Posterior vena cava (tissue), 2 donors: ENCODE measurements at regions of chr17 and their contacts with region 1.

Region 1: GRCh38 chr17:40303009-40303657 is 5.8 kb upstream of the RARA start:
- DNase-seq: no peak

Region 2: GRCh38 chr17:39094607-39095308 is 1208.4 kb before region 1 on chr17:
- intact Hi-C with region 1: loop called in 1 of 2 experiments (anchors 5 kb)
- DNase-seq: no peak

Region 3: GRCh38 chr17:40433551-40434415 is 130.7 kb after region 1 on chr17:
- intact Hi-C with region 1: loop called in 1 of 2 experiments (anchors 10 kb)
- DNase-seq: no peak